Activated CD4-positive, alpha-beta memory T cell treated with anti-CD3 and anti-CD28 coated beads for 36 hours (primary cell): ENCODE measurements at regions of chr5 and their contacts with region 1.

Region 1: GRCh38 chr5:14595189-14595588 is 13.6 kb downstream of the OTULINL start:
- DNase-seq: peak; percentile 50
- H3K4me3 Mint-ChIP-seq: peak overlapping the region; percentile 63
- H3K27ac Mint-ChIP-seq: peak overlapping the region; percentile 70
- H3K4me1 Mint-ChIP-seq: peaks cover 84% of the 10 kb centered on the region
- H3K27me3 Mint-ChIP-seq: no peaks in the 10 kb centered on the region

Region 2: DNA sequence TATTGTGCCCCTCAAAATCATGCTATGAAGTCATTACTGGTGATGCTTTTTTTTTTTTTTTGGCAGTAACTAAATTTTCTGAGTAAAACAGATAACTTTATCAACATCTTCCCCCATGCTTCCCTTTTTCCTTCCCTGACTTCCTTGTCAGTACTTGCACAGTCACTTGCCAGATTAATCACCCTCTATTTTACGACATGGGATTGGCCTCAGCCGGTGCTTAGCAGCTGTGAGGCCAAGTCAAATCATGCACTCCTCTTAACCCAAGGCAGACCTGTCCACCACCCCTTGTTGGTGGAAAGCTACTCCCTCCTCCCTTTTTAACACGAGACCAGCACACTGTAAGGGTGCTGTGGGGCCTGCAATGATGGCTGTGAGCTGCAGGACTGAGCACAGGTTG is 131.6 kb before region 1 on chr5:
- CTCF ChIA-PET with region 1: no interaction called
- POLR2A ChIA-PET with region 1: no interaction called
- intact Hi-C with region 1: no loop called
- DNase-seq: no peak
- H3K4me3 Mint-ChIP-seq: no peak overlapping the region
- H3K27ac Mint-ChIP-seq: no peak overlapping the region
- H3K4me1 Mint-ChIP-seq: no peaks in the 10 kb centered on the region
- H3K27me3 Mint-ChIP-seq: no peaks in the 10 kb centered on the region

Region 3: GRCh38 chr5:14476786-14477435 is 118.3 kb before region 1 on chr5:
- CTCF ChIA-PET with region 1: no interaction called
- POLR2A ChIA-PET with region 1: no interaction called
- intact Hi-C with region 1: loop called (anchors 5 kb)
- DNase-seq: no peak
- H3K4me3 Mint-ChIP-seq: no peak overlapping the region
- H3K27ac Mint-ChIP-seq: no peak overlapping the region
- H3K4me1 Mint-ChIP-seq: peaks cover 10% of the 10 kb centered on the region
- H3K27me3 Mint-ChIP-seq: peaks cover 2% of the 10 kb centered on the region

Region 4: GRCh38 chr5:14996997-14997396 is 401.8 kb after region 1 on chr5:
- CTCF ChIA-PET with region 1: no interaction called
- POLR2A ChIA-PET with region 1: no interaction called
- intact Hi-C with region 1: loop called (anchors 10 kb)
- DNase-seq: no peak
- H3K4me3 Mint-ChIP-seq: no peak overlapping the region
- H3K27ac Mint-ChIP-seq: no peak overlapping the region
- H3K4me1 Mint-ChIP-seq: peaks cover 21% of the 10 kb centered on the region
- H3K27me3 Mint-ChIP-seq: no peaks in the 10 kb centered on the region